AG04449 (cell line): ENCODE measurements at regions of chr7 and their contacts with region 1.

Region 1: DNA sequence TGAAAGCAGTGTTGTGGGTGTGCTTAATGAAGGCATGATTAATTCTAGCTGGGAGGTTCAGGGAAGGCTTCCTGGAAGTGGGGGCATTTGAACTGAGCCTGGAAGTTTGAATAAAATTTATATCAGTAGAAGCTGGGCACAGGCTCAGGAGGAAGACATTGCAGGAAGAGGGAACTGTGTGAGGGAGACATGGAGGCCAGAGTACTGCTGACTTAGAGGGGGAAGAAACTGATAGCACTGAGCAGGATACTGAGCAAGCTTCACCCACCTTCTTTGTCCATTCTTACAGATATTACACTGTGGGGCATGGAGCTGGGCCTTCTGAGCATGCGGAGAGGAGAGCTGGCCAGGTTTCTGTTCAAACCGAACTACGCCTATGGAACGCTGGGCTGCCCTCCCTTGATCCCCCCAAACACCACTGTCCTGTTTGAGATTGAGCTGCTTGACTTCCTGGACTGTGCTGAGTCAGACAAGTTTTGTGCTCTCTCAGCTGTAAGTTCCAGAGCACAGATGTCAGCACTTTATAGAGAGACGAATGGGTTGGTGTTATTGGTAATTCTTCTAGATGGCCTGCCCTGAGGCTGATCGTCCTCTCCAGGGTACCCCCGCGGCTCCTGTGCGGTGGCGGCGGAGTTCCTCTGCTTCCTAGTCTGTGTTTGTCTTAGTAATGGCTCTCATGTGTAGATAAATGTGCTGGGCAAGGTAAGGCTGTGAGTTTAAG is 2.1 kb downstream of the FKBP6 start:
- DNase-seq: no peak
- H3K4me3 ChIP-seq: no peak overlapping the region; the same call in 1 of the 2 replicates
- CTCF ChIP-seq: no peak

Region 2: DNA sequence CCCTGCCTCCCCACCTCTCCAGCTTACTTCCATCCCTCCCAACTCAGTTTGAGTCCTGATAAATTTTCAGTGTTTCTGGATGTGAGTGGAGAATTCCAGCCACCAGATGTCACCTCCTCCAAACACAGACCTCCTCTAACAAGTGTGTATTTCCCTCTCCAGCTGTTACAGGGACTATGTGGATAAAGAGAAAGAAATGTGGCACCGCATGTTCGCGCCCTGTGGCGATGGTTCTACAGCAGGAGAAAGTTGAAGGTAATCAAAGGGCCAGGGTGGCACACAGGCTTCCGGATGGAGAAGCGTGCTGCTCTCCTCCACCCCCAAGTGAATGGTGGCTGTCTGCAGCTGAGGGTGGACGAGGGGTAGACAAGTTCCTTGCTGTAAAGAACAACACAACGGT is 12.6 kb after region 1 on chr7:
- CTCF ChIA-PET with region 1: interaction called, 17 read pairs
- POLR2A ChIA-PET with region 1: no interaction called
- DNase-seq: no peak
- H3K4me3 ChIP-seq: peak overlapping the region; percentile 32; the same call in 1 of the 2 replicates
- CTCF ChIP-seq: peak; percentile 65